Pancreas (tissue), 10 donors: ENCODE measurements at regions of chr4 and their contacts with region 1.

Region 1: GRCh38 chr4:38902695-38903094 is 35.1 kb downstream of the FAM114A1 start:
- DNase-seq: no peak
- ATAC-seq: peak; percentile 55 to 77 (median 72)
- H3K4me3 ChIP-seq: no peak overlapping the region
- H3K27ac ChIP-seq: no peak overlapping the region
- H3K4me1 ChIP-seq: peaks cover 14 to 18% (median 15%) of the 10 kb centered on the region in 3 donors
- H3K27me3 ChIP-seq: no peaks in the 10 kb centered on the region
- CTCF ChIP-seq: peak in 1 of 4 donors; percentile 11

Region 2: DNA sequence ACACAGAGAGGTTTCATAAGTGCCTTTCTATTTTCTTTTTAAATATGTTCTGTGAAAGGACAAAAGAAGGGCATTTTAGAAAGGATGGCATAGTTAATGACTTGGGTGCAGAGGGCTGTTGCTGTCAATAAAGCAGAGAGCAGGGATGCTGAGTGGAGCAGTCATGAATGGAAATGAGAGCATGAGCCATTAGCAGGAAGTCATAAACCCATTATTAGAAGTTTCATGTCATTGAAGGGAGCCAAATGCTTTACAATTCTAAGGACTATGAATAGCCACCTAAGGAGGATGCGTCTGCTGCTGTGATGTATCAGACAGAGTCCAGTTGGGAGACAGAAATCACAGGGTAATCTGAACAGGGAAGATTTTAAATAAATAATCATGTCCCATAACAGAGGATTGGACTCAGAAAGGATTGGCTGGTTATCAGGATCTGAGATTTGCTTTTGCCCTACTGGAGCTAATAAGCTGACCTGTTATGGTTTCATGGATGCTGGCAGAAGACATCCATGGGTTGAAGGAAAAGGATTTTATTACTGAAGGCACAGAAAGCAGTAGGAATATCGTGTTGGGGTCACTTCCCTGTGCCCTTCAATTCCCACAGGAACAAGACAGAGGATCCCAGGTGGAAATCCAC is 232.1 kb after region 1 on chr4:
- intact Hi-C with region 1: loop called in 2 of 3 experiments (anchors 5 to 10 kb)
- DNase-seq: no peak
- ATAC-seq: peak in 3 of 4 donors; percentile 8 to 28 (median 26)
- H3K4me3 ChIP-seq: no peak overlapping the region
- H3K27ac ChIP-seq: no peak overlapping the region
- H3K4me1 ChIP-seq: no peaks in the 10 kb centered on the region
- H3K27me3 ChIP-seq: no peaks in the 10 kb centered on the region
- CTCF ChIP-seq: no peak